CD14-positive monocyte (primary cell): ENCODE measurements at regions of chr2 and their contacts with region 1.

Region 1: DNA sequence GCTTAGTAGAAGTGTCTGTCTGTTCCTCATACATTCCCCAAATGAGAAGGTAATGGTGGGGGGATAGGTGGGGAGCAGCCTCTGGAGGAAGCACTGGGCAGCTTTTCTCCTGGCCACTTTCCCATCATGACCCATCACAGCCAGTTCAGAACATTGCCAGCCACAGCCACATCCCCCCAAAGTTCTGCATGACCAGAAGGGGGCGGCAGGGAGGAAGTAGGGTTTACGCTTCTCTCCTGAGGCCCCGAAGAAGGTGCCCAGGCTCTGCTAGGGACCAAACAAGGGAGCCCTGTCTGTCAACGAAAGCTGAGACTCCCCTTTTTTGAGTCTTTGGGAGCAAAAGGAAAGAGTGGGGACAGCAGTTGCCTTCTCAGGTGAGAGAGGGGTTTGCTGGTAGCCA is 7.7 kb downstream of the IGFBP5 start:
- DNase-seq: no peak
- H3K4me3 ChIP-seq: no peak overlapping the region
- H3K4me3 Mint-ChIP-seq: no peak overlapping the region
- H3K27ac ChIP-seq: no peak overlapping the region
- H3K27ac Mint-ChIP-seq: no peak overlapping the region
- H3K4me1 ChIP-seq: peaks cover 8 to 18% of the 10 kb centered on the region in 2 donors
- H3K4me1 Mint-ChIP-seq: peaks cover 25% of the 10 kb centered on the region
- H3K27me3 ChIP-seq: peaks cover 33 to 43% of the 10 kb centered on the region in 2 donors
- H3K27me3 Mint-ChIP-seq: peaks cover 45 to 50% (median 47%) of the 10 kb centered on the region in 3 donors
- CTCF ChIP-seq: no peak

Region 2: DNA sequence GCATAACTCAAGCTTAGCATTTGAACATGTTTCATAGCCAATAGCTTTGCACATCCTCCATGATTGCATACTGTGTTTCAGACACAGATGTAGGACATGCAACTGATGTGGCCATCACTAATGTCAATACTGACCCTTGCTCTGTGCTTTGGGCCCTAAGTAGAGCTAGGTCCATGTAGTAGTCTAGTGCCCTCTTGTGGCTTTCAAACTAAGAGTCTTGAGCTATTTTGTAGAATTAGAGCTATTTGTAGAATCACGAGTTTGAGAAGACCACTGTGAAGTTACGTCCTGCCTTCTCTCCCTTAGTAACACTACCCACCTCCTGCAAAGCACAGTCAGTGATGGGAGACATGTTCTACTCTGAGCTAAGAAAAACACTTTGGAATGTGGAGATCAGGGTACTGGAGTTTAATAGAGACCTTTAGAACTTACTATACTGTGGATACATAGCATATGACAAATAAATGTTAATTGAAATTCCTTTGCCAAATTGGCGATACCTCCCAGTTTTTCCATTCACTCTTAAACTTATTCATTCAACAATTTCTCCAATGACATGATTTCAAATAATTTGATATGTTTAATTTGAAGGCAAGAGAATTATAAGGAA is 478.7 kb after region 1 on chr2:
- intact Hi-C with region 1: loop called in 1 of 2 experiments (anchors 10 kb)
- DNase-seq: peak; percentile 3 to 39 (median 32)
- H3K4me3 ChIP-seq: no peak overlapping the region
- H3K4me3 Mint-ChIP-seq: peak overlapping the region in 1 of 2 donors; percentile 64
- H3K27ac ChIP-seq: no peak overlapping the region
- H3K27ac Mint-ChIP-seq: no peak overlapping the region
- H3K4me1 ChIP-seq: peaks cover 2 to 4% of the 10 kb centered on the region in 2 donors
- H3K4me1 Mint-ChIP-seq: peaks cover 12% of the 10 kb centered on the region
- H3K27me3 ChIP-seq: peaks cover 79% of the 10 kb centered on the region in 2 donors
- H3K27me3 Mint-ChIP-seq: peaks cover 59 to 93% (median 86%) of the 10 kb centered on the region in 3 donors
- CTCF ChIP-seq: peak; percentile 63

Region 3: DNA sequence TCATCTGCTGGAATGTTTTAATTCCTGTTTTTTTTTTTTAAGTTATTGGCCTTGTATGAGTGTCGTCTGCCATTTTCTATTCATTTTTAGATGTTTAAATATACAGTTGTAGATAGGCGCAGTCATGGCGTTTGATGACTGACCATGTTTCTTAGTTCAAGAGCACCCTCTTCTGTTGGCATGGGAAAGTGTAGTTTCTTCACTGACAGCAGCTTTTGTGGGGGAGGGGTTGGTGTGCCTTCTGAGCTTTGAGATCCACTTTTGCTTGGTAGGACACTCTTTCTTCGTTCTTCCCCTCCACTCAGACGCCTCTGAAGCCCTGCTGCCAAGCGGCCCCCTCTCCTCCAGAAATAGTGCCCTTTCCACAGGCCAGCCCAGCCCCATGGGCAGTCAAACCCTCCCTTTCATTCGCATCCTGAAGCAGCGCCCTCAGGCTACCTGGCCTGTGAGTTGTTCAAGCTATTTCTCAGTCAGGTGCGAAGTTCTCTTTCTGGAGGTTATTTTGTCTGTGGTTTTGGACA is 823.2 kb after region 1 on chr2:
- intact Hi-C with region 1: loop called (anchors 2 to 5 kb)
- DNase-seq: peak; percentile 19 to 56 (median 42)
- H3K4me3 ChIP-seq: no peak overlapping the region
- H3K4me3 Mint-ChIP-seq: peak overlapping the region in 1 of 2 donors; percentile 55
- H3K27ac ChIP-seq: no peak overlapping the region
- H3K27ac Mint-ChIP-seq: no peak overlapping the region
- H3K4me1 ChIP-seq: peaks cover 0 to 4% of the 10 kb centered on the region in 2 donors
- H3K4me1 Mint-ChIP-seq: peaks cover 17% of the 10 kb centered on the region
- H3K27me3 ChIP-seq: peaks cover 0 to 5% of the 10 kb centered on the region in 2 donors
- H3K27me3 Mint-ChIP-seq: peaks cover 2 to 14% (median 5%) of the 10 kb centered on the region in 3 donors
- CTCF ChIP-seq: peak; percentile 56

Region 4: GRCh38 chr2:217713395-217714286 is 1026.0 kb after region 1 on chr2:
- intact Hi-C with region 1: loop called (anchors 5 kb)
- DNase-seq: peak; percentile 40 to 56 (median 49)
- H3K4me3 ChIP-seq: no peak overlapping the region
- H3K4me3 Mint-ChIP-seq: peak overlapping the region in 1 of 2 donors; percentile 44
- H3K27ac ChIP-seq: no peak overlapping the region
- H3K27ac Mint-ChIP-seq: no peak overlapping the region
- H3K4me1 ChIP-seq: peaks cover 6 to 8% of the 10 kb centered on the region in 2 donors
- H3K4me1 Mint-ChIP-seq: peaks cover 18% of the 10 kb centered on the region
- H3K27me3 ChIP-seq: no peaks in the 10 kb centered on the region
- H3K27me3 Mint-ChIP-seq: peaks cover 8 to 27% (median 12%) of the 10 kb centered on the region in 3 donors
- CTCF ChIP-seq: peak; percentile 96